Activated CD4-positive, alpha-beta T cell treated with anti-CD3 and anti-CD28 coated beads for 36 hours (primary cell): ENCODE measurements at regions of chr1 and their contacts with region 1.

Region 1: DNA sequence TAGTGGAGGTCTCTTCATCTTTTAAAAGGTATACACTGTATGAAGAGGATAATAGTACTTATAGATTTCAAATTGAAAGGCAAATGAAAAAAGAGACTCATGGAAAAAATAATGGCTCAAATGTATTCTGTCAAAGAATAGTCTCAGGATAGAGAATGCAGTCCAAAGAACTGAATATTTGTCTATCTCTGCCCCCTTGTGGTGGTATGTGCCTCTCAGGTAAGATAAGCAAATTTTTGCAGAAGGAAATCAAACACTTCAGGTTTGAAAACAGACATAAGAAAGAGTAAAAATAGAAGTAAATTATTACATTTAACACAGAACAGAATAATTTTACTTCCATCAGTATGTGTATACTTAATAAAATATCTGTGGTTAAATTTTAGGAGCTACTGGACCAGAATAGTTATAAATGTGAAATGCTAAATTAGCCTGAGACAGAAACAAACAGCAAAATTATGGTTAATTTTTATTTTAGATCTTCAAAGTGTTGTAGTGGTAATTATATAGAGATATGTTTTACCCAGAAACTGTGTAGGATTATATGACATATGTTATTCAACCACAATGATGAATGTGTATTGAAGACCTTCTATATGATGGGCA is 164.4 kb upstream of the PALMD start:
- DNase-seq: peak; percentile 46
- ATAC-seq: no peak
- H3K4me3 Mint-ChIP-seq: no peak overlapping the region
- H3K27ac Mint-ChIP-seq: no peak overlapping the region
- H3K4me1 Mint-ChIP-seq: no peaks in the 10 kb centered on the region
- H3K27me3 Mint-ChIP-seq: peaks cover 4% of the 10 kb centered on the region

Region 2: GRCh38 chr1:98749152-98749756 is 732.2 kb before region 1 on chr1:
- CTCF ChIA-PET with region 1: interaction called, 3 read pairs
- POLR2A ChIA-PET with region 1: no interaction called
- intact Hi-C with region 1: loop called in 1 of 2 experiments (anchors 2 kb)
- DNase-seq: no peak
- ATAC-seq: no peak
- H3K4me3 Mint-ChIP-seq: no peak overlapping the region
- H3K27ac Mint-ChIP-seq: no peak overlapping the region
- H3K4me1 Mint-ChIP-seq: no peaks in the 10 kb centered on the region
- H3K27me3 Mint-ChIP-seq: peaks cover 2% of the 10 kb centered on the region

Region 3: GRCh38 chr1:99180343-99180808 is 301.1 kb before region 1 on chr1:
- CTCF ChIA-PET with region 1: interaction called, 13 read pairs
- POLR2A ChIA-PET with region 1: no interaction called
- intact Hi-C with region 1: loop called (anchors 1 kb)
- DNase-seq: peak; percentile 80
- ATAC-seq: peak; percentile 91
- H3K4me3 Mint-ChIP-seq: no peak overlapping the region
- H3K27ac Mint-ChIP-seq: no peak overlapping the region
- H3K4me1 Mint-ChIP-seq: no peaks in the 10 kb centered on the region
- H3K27me3 Mint-ChIP-seq: no peaks in the 10 kb centered on the region

Region 4: DNA sequence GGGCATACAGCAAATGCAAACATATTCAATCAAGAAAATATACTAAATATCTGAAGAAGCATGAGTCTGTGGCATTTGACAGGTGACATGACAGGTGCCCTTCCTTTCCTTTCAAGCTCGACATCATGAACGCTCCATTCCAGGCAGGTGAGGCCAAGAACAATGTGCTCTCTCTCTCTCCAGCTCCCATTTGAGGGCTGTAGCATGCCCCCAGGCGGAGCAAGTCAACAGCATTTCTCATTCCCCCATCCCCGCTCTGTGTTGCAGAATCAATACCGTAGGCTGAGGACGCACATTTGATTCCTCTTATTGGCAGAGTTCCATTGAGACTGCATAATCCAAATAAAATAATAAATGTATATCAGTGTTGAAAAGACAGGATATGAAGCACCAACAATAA is 241.8 kb before region 1 on chr1:
- CTCF ChIA-PET with region 1: no interaction called
- POLR2A ChIA-PET with region 1: no interaction called
- intact Hi-C with region 1: no loop called
- DNase-seq: no peak
- ATAC-seq: no peak
- H3K4me3 Mint-ChIP-seq: no peak overlapping the region
- H3K27ac Mint-ChIP-seq: no peak overlapping the region
- H3K4me1 Mint-ChIP-seq: no peaks in the 10 kb centered on the region
- H3K27me3 Mint-ChIP-seq: peaks cover 5% of the 10 kb centered on the region

Region 5: DNA sequence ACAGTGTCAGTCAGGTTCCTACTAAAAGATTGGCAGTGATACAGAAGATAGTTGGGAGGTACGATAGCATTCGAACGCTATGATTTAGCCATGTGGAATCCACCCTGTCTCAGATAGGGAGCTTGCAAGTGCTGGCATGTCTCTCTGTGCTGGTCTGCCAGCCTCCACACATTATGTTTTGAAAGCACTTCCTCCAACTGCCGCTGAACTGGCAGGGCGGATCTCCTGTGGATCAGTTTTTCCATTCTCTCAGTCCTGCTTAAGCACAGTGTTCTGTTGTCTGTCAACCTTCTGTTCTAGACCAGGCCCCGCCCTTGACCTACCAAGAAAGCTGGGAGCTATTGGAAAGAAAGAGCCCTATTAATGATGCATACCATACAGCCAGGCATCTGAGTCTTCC is 99.0 kb after region 1 on chr1:
- CTCF ChIA-PET with region 1: no interaction called
- POLR2A ChIA-PET with region 1: no interaction called
- intact Hi-C with region 1: no loop called
- DNase-seq: no peak
- ATAC-seq: no peak
- H3K4me3 Mint-ChIP-seq: no peak overlapping the region
- H3K27ac Mint-ChIP-seq: no peak overlapping the region
- H3K4me1 Mint-ChIP-seq: no peaks in the 10 kb centered on the region
- H3K27me3 Mint-ChIP-seq: peaks cover 3% of the 10 kb centered on the region